ENCODE measurements at regions of chr6 and their contacts with region 1.

Region 1: DNA sequence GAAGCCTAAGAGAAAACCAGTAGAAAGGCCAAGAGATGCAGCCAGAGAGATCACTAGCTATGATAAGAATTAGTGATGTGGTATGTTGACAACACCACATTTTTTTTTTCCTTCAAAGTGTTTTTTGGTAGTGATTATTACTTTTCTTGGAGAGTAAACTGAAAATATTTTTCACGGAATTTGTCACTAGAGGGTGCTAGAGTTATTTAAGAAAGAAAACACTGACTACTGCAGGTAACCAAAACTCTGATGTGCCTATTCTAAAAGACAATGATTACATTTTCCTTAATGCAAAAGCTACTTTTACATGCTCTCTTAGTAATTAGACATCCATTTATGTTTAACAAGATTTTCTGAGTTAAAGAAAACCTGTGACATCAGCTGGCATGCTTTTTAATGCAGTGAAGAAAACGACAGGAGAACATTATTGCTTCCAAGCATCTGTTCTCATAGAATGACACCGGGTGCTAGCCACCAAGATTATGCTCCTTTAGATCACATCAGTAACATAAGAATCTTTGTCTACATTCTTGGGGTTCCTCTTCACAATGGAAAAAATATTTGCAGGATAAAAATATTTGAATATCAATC is 28.8 kb downstream of the RWDD2A start:
- DNase-seq: no peak
- H3K4me3 ChIP-seq: no peak overlapping the region
- H3K27ac ChIP-seq: no peak overlapping the region
- H3K4me1 ChIP-seq: no peaks in the 10 kb centered on the region
- H3K27me3 ChIP-seq: no peaks in the 10 kb centered on the region
- CTCF ChIP-seq: peak in 3 of 4 experiments; percentile 41 to 54 (median 49)
- POLR2A ChIP-seq: no peak

Region 2: DNA sequence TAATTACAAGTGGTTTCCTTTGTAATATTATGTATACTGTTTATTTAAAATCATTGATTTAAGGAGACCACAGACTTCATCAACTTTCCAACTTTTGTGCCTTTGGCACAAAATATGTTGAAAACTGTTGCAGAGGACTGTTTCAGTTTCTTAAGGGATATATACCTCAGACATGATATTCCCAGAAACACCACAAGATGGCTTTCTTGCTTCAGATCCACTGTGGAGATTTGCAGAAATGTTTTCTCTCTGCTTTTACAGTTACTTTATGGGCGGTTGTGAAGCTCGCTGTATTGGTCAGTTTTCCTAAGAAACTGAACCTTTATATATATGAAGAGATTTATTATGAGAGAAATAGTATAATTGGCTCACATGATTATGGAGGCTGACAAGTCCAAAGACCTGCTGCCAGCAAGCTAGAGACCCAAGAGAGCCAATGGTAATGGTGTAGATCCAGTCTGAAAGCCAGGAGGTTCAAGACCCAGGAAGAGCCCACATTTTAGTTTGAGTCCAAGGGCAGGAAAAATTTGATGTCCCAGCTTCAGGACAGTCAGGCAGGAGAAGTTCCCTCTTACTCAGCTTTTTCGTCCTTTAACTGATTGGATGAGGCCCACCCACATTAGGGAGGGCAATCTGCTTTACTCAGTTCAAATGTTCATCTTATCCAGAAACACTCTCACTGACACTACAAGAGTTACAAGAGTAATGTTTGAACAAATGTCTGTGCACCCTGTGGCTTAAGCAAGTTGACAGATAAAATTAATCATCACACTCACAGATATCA is 196.1 kb after region 1 on chr6:
- intact Hi-C with region 1: loop called (anchors 5 kb)
- DNase-seq: no peak
- H3K4me3 ChIP-seq: no peak overlapping the region
- H3K27ac ChIP-seq: no peak overlapping the region
- H3K4me1 ChIP-seq: no peaks in the 10 kb centered on the region
- H3K27me3 ChIP-seq: no peaks in the 10 kb centered on the region
- CTCF ChIP-seq: peak in 3 of 4 experiments; percentile 54 to 83 (median 68)
- POLR2A ChIP-seq: no peak

Region 3: GRCh38 chr6:83436674-83437073 is 214.7 kb after region 1 on chr6:
- intact Hi-C with region 1: loop called (anchors 5 kb)
- DNase-seq: no peak
- H3K4me3 ChIP-seq: no peak overlapping the region
- H3K27ac ChIP-seq: no peak overlapping the region
- H3K4me1 ChIP-seq: no peaks in the 10 kb centered on the region
- H3K27me3 ChIP-seq: no peaks in the 10 kb centered on the region
- CTCF ChIP-seq: no peak
- POLR2A ChIP-seq: no peak

Region 4: GRCh38 chr6:83514866-83515466 is 293.0 kb after region 1 on chr6:
- intact Hi-C with region 1: loop called (anchors 2 kb)
- DNase-seq: peak; percentile 23
- H3K4me3 ChIP-seq: no peak overlapping the region
- H3K27ac ChIP-seq: no peak overlapping the region
- H3K4me1 ChIP-seq: no peaks in the 10 kb centered on the region
- H3K27me3 ChIP-seq: no peaks in the 10 kb centered on the region
- CTCF ChIP-seq: peak; percentile 75 to 84 (median 80)
- POLR2A ChIP-seq: no peak

Measured in prostate gland (tissue), 2 donors.